ENCODE measurements at regions of chr6 and their contacts with region 1.

Region 1: GRCh38 chr6:29737707-29738630 is 14.7 kb downstream of the HLA-F start:
- DNase-seq: peak; percentile 65

Region 2: DNA sequence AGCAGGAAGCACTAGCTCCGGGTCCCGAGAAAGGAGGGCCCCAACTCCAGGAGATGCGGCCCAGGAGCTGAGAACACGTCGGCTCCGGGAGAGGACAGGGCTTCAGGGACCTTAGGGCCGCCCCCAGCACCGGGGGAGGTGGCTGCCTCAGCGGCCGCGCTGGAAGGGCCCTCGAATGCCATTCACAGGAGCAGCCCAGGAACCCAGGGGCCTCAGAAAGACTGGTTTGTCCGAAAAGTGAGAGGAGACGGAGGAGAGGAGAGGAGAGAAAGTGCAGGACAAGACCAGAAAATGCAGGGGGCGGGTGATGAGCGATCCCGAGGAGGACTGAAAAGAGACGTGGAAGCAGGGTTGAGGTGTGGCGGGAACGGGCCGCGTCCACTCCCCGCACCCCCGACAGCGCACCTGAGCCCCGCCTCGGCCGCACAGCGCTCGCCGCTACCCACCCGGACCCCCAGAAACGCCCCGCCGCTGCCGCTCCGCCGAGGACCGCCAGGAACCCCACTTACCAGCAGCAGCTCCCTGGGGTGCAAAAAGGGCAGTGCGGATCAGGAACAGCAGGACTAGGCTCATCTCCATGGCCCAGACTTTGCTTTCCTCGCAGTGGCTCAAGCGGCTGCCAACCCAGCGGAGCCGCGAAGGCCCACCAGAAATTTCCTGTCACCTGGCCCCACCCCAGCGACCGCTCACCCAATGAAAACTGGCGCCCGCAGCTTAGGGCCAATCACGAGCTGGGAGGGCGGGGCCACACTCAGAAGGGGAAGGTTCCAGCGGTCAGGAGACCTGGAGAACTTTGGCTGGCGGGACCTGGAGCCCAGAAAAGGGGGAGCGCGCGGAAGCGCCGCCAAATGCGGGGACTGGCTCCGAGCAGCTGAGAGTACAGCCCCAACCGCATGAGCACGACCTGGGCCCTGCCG is 10.7 kb after region 1 on chr6:
- CTCF ChIA-PET with region 1: interaction called, 15 read pairs
- POLR2A ChIA-PET with region 1: interaction called, 4 read pairs
- DNase-seq: peak; percentile 88

Region 3: DNA sequence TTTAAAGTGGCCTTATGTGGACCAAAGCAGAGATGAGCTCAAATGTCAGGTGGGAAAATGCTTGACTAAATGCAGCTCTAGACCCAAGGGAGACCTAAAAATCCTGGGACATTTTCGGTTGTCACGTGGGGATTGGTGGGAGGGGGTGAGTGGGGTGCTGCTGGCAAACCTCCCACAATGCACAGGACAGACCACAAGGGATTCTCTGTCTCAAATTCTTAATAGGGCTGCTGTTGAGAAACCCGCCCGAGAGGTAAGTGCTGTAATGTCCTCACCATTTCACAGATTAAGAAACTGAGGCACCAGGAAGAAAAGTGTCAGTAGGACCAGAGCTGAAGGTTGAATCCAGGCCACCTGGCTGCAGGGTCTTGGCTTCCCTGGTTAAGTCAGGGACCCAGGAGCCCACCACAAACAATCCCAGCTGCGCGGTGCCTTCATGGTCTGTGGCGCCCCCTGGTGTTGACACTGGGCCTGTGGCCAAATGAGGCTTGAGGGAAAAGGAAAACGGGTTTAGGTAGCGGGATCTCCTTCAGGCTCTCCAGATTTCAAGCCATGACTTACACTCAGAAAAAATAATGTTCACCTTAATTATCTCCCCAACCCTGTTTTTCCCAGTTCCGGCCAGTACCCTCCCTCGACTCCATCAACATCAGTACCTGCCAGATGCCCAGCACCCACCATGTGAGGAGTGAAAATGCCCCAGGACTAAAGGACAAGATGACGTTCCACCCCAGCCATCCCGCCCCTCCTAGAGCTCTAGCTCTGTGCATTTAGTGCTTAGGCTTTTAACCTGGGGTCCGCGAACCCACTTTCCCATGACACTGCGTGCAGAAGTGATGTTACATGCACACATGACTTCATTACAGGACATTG is 96.8 kb after region 1 on chr6:
- CTCF ChIA-PET with region 1: interaction called, 22 read pairs
- POLR2A ChIA-PET with region 1: interaction called, 3 read pairs
- DNase-seq: peak; percentile 44

Measured in HEK293T (cell line).